Mucosa of descending colon (tissue), 3 donors: ENCODE measurements at regions of chr16 and their contacts with region 1.

Region 1: DNA sequence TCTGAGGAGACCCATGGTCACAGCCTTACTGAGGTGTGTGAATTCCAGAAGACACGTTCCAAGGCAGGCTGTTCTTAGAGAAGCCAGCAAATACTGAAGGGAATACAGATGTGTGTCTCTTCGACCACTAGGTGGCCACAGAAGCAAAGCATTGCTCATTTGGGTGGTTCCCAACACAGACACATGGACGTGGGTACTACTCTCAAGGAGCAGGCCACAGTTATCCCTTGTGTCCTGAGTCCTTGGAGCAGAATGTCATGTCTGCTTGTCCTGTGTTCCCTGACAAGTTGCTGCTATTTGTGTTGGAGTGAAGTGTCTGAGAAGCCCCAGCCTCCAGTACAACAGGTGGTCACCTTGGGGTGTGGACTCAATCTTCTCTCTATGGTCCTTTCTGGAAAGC is 30.3 kb downstream of the HMOX2 start:
- DNase-seq: peak in 1 of 3 donors; percentile 79
- ATAC-seq: peak; percentile 74
- H3K4me3 ChIP-seq: no peak overlapping the region
- H3K4me1 ChIP-seq: peaks cover under 1% of the 10 kb centered on the region
- CTCF ChIP-seq: peak; percentile 47

Region 2: DNA sequence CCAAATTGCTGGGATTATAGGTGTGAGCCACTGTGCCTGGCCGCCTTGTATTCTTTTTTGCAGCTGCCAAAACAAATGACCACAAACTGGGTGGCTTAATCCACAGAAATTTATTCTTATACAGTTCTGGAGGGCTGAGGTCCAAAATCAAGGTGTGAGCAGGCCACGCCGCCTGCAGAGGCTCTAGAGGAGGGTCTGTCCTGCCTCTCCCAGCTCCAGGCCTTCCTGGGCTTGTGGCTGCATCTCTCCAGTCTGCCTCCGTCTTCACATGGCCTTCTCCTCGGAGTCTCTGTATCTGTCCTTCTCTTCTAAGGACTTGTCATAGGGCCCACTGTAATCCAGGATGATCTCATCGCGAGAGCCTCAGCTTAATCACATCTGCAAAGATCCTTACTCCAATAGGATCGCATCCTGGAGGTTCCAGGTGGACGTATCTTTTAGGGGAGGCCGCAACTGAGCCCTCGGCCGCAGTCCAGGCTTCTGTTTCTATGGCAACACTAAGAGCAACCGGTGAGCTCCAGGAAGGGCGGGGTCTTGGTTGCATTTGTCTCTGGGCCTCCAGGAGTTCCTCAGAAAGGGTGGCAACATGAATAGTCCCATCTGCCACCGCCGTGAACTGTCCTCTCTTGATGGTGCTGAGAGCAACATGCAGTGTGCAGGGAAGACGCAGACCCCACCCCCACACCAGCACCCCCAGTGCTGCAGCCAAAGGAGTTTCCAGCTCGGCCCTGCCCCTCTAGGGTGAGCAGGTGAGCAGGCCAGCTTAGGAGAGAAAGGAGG is 596.5 kb before region 1 on chr16:
- intact Hi-C with region 1: no loop called
- DNase-seq: no peak
- ATAC-seq: no peak
- H3K4me3 ChIP-seq: no peak overlapping the region
- H3K4me1 ChIP-seq: no peaks in the 10 kb centered on the region
- CTCF ChIP-seq: no peak

Region 3: DNA sequence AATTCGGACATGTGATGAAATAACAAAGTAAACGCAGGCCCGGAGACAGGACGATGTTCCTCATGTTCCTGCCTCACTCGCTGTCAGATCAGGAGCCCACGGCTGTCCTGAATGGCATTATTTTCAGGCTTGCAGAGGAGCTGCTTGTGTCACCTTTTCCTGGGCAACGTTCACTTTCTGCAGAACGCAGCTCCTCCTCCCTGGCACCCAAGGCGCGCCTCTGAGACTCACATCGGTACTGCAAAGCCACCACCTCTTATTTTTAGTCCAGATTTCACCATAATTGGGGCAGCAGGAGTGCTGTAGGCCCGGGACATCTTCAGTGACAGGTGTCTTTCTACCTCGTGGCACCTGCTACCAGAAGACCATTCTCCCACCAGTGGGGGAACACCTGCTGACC is 41.7 kb after region 1 on chr16:
- intact Hi-C with region 1: loop called in 1 of 2 experiments (anchors 5 kb)
- DNase-seq: no peak
- ATAC-seq: no peak
- H3K4me3 ChIP-seq: no peak overlapping the region
- H3K4me1 ChIP-seq: no peaks in the 10 kb centered on the region
- CTCF ChIP-seq: no peak

Region 4: GRCh38 chr16:4624827-4625559 is 118.5 kb after region 1 on chr16:
- intact Hi-C with region 1: no loop called
- DNase-seq: peak; percentile 81 to 86 (median 82)
- ATAC-seq: peak; percentile 52
- H3K4me3 ChIP-seq: peak overlapping the region; percentile 87
- H3K4me1 ChIP-seq: peaks cover 13% of the 10 kb centered on the region
- CTCF ChIP-seq: no peak